G401 (cell line): ENCODE measurements at regions of chr17 and their contacts with region 1.

Region 1: GRCh38 chr17:49501504-49501903 is 6.4 kb downstream of the NGFR start:
- DNase-seq: peak; percentile 82

Region 2: GRCh38 chr17:49543860-49544259 is 42.4 kb after region 1 on chr17:
- in situ Hi-C with region 1: loop called (anchors 5 kb)
- DNase-seq: no peak